Posterior vena cava (tissue), 2 donors: ENCODE measurements at regions of chr1 and their contacts with region 1.

Region 1: DNA sequence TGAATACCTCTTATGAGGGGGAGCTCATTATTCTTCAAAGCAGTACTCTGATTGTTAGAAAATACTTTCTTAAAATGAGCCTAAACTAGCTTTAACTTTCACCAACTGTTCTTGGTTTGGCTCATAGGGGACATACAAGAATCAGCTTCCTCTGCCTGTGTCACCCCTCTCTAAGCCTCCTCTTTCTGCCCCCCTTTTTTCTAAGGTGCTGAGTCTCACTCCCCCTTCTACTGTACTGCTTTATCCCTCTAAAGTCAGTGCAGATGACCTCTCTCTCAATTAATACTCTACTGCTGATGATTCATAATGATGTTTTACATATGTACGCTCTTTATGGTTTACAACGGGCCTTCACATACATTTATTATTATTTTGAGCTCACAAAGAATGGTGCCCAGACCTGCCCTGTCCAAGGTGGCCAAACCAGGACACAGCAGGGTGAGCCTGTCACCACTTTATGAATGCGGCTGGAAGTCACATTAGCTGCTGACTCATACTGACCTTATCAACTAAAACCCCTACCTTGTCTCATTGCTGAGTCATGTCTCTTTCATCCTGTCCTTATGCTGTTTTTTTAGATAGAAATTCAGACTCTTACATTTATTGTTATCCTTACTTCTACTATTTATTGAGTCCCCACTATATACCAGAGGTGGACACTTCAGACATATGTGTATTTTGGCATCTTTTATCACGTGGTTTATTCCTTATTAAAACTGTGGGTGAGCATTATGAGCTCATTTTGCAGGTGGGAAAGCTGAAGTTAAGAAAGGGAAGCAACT is 126.9 kb downstream of the RNF220 start:
- DNase-seq: no peak

Region 2: GRCh38 chr1:43300378-43301094 is 1231.4 kb before region 1 on chr1 and contains the start of gene TIE1:
- intact Hi-C with region 1: loop called in 1 of 2 experiments (anchors 10 kb)
- DNase-seq: no peak
- total RNA-seq, gene TIE1: 32.5 to 46.6 TPM

Region 3: DNA sequence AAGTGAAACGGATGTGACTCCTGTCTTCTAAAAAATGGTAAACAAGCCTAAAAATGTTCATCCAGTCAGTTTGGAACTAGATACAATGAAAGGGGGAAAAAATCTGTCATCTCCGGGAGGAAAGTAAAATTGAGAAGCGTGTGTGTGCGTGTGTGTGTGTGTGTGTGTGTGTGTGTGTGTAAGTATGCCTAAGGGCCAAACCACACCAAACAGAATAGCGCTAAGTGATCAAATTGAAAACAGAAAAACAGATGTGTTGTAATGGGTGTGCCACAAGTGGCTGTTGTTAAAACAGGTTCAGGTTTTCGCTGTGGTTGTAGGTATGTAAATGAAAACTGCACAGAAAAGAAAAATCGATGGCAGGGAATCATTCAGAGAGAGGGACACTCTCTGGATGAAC is 20.2 kb before region 1 on chr1:
- intact Hi-C with region 1: no loop called
- DNase-seq: no peak